Heart left ventricle (tissue), 16 donors: ENCODE measurements at regions of chr1 and their contacts with region 1.

Region 1: DNA sequence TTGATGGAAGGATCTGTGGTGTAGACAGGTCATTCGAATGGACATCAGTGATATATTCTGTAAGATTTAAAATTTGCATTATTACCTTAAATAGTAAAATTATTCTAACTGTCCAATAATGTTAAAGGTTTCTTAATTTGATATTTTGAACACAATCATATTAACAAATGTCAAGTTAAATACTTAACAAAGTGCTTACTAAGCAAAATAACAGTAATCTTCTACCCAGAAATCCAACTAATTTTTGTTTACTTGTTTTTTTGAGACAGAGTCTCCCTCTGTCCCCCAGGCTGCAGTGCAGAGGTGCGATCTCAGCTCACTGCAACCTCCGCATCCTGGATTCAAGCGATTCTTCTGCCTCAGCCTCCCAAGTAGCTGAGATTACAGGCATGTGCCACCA is 33.9 kb downstream of the USP33 start:
- DNase-seq: no peak
- ATAC-seq: no peak
- H3K4me3 ChIP-seq: no peak overlapping the region
- H3K27ac ChIP-seq: no peak overlapping the region
- H3K4me1 ChIP-seq: peaks cover 0 to 4% (median 0%) of the 10 kb centered on the region in 12 donors
- H3K27me3 ChIP-seq: no peaks in the 10 kb centered on the region
- CTCF ChIP-seq: no peak
- POLR2A ChIP-seq: no peak

Region 2: GRCh38 chr1:77524038-77524437 is 201.7 kb before region 1 on chr1:
- intact Hi-C with region 1: no loop called
- DNase-seq: no peak
- ATAC-seq: no peak
- H3K4me3 ChIP-seq: no peak overlapping the region
- H3K27ac ChIP-seq: no peak overlapping the region
- H3K4me1 ChIP-seq: no peaks in the 10 kb centered on the region
- H3K27me3 ChIP-seq: no peaks in the 10 kb centered on the region
- CTCF ChIP-seq: no peak
- POLR2A ChIP-seq: no peak

Region 3: GRCh38 chr1:77632216-77632615 is 93.5 kb before region 1 on chr1:
- intact Hi-C with region 1: no loop called
- DNase-seq: no peak
- ATAC-seq: no peak
- H3K4me3 ChIP-seq: no peak overlapping the region
- H3K27ac ChIP-seq: peak overlapping the region in 1 of 12 donors; percentile 32
- H3K4me1 ChIP-seq: peaks cover 0 to 3% (median 0%) of the 10 kb centered on the region in 12 donors
- H3K27me3 ChIP-seq: no peaks in the 10 kb centered on the region
- CTCF ChIP-seq: no peak
- POLR2A ChIP-seq: no peak

Region 4: DNA sequence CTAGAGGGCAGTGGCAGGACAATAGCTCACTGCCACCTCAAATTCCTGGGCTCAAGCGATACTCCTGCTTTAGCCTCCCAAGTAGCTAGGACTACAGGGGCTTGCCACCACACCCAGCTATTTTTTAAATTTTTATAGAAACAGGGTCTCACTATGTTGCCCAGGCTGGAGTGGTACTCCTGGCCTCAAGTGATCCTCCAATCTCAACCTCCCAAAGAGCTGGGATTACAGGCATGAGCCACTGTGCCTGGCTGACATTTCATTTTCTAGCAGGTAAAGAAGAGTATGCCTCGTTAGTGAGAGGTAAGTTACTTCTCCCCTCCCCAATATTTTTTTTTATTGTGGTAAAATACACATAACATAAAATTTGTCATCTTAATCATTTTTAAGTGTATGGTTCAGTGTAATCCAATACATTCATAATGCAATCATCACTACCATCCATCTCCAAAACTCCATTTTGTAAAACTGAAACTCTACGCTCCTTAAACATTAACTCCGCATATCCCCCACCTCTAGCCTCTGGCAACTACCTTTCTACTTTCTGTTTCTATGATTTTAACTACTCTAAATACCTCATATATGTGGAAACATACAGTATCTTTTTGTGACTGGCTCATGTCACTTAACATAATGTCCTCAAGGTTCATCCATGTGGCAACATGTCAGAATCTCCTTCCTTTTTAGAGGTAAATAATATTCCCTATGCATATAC is 65.7 kb before region 1 on chr1:
- intact Hi-C with region 1: no loop called
- DNase-seq: no peak
- ATAC-seq: no peak
- H3K4me3 ChIP-seq: no peak overlapping the region
- H3K27ac ChIP-seq: no peak overlapping the region
- H3K4me1 ChIP-seq: peaks cover 0 to 15% (median 4%) of the 10 kb centered on the region in 12 donors
- H3K27me3 ChIP-seq: no peaks in the 10 kb centered on the region
- CTCF ChIP-seq: no peak
- POLR2A ChIP-seq: no peak

Region 5: DNA sequence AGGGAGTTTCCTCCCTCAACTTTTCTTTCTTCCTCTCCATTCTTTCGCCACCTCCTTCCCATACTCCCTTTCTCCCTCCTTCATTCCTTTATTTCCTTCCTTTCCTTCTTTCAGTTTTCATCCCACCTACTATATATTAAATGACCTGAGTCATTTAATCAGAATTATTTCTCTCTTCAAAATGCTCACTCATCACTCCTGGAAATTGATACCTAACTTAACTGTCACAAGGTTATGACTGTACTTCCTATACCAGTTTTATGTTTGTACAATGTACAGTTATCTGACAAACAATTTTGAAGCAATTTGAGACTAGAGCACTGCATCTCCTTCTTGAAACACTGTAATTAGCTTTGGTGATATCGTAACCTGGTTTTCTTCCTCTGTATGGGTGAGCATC is 204.1 kb after region 1 on chr1:
- intact Hi-C with region 1: loop called in 1 of 10 experiments (anchors 10 kb)
- DNase-seq: no peak
- ATAC-seq: no peak
- H3K4me3 ChIP-seq: no peak overlapping the region
- H3K27ac ChIP-seq: no peak overlapping the region
- H3K4me1 ChIP-seq: peaks cover 0 to 15% (median 0%) of the 10 kb centered on the region in 12 donors
- H3K27me3 ChIP-seq: no peaks in the 10 kb centered on the region
- CTCF ChIP-seq: no peak
- POLR2A ChIP-seq: no peak

Region 6: DNA sequence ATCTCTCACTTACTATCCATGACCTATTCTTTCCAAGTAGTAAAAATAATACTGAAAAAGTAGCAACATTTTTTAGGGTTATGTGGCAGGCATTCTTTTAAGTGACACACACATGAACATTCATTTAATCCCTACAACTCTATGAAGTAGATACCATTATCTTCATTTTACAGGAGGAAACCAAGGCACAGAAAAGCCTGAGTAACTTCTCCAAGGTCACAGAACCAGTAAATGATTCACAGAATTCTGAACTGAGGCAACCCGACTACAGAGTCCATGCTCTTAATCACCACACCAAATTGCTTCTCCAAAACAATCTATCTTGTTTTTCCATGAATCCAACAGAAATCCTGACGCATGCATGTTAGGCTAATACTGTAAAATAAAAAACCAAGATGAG is 235.7 kb after region 1 on chr1:
- intact Hi-C with region 1: loop called in 1 of 10 experiments (anchors 10 kb)
- DNase-seq: no peak
- ATAC-seq: no peak
- H3K4me3 ChIP-seq: no peak overlapping the region
- H3K27ac ChIP-seq: no peak overlapping the region
- H3K4me1 ChIP-seq: no peaks in the 10 kb centered on the region
- H3K27me3 ChIP-seq: no peaks in the 10 kb centered on the region
- CTCF ChIP-seq: no peak
- POLR2A ChIP-seq: no peak